K562 (cell line): ENCODE measurements at regions of chr6 and their contacts with region 1.

Region 1: DNA sequence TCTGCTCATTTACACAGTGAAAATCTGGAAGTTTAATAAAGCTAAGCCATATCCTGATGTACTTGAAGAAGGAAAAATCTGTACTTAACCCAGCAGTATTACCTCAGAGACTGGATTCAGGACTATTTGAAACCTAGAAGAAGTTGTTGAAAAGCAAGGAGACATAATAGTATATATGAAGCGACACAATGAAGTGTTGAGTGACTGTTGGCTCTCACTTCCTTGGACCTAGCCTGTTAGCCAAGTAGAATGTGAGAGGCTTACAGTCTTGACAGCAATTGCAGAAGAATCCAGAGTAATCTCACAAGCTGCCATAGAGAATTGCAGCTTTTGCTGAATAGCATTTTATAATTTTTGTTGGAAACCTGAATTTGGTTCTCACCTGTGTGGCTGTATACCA is 26.7 kb downstream of the SMAP1 start:
- DNase-seq: no peak
- ATAC-seq: no peak
- H3K4me3 ChIP-seq: no peak overlapping the region
- H3K27ac ChIP-seq: no peak overlapping the region
- H3K4me1 ChIP-seq: no peaks in the 10 kb centered on the region
- H3K27me3 ChIP-seq: no peaks in the 10 kb centered on the region; a peak in 1 of 5 replicates
- CTCF ChIP-seq: no peak
- EP300 ChIP-seq: no peak
- POLR2A ChIP-seq: no peak
- RAD21 ChIP-seq: no peak

Region 2: GRCh38 chr6:70304616-70305015 is 389.8 kb before region 1 on chr6:
- CTCF ChIA-PET with region 1: no interaction called
- POLR2A ChIA-PET with region 1: no interaction called
- in situ Hi-C with region 1: loop called (anchors 10 kb)
- intact Hi-C with region 1: no loop called
- DNase-seq: no peak
- ATAC-seq: no peak
- H3K4me3 ChIP-seq: no peak overlapping the region
- H3K27ac ChIP-seq: no peak overlapping the region
- H3K4me1 ChIP-seq: no peaks in the 10 kb centered on the region
- H3K27me3 ChIP-seq: peaks cover 12 to 21% of the 10 kb centered on the region in 2 experiments; a peak in 4 of 5 replicates
- CTCF ChIP-seq: no peak
- EP300 ChIP-seq: no peak
- POLR2A ChIP-seq: no peak
- RAD21 ChIP-seq: no peak

Region 3: GRCh38 chr6:70725817-70726415 is 31.5 kb after region 1 on chr6:
- CTCF ChIA-PET with region 1: no interaction called
- POLR2A ChIA-PET with region 1: no interaction called
- in situ Hi-C with region 1: no loop called
- intact Hi-C with region 1: no loop called
- DNase-seq: no peak
- ATAC-seq: no peak
- H3K4me3 ChIP-seq: no peak overlapping the region
- H3K27ac ChIP-seq: no peak overlapping the region
- H3K4me1 ChIP-seq: no peaks in the 10 kb centered on the region; a peak in 1 of 5 replicates
- H3K27me3 ChIP-seq: no peaks in the 10 kb centered on the region
- CTCF ChIP-seq: no peak
- EP300 ChIP-seq: no peak
- POLR2A ChIP-seq: no peak
- RAD21 ChIP-seq: no peak

Region 4: DNA sequence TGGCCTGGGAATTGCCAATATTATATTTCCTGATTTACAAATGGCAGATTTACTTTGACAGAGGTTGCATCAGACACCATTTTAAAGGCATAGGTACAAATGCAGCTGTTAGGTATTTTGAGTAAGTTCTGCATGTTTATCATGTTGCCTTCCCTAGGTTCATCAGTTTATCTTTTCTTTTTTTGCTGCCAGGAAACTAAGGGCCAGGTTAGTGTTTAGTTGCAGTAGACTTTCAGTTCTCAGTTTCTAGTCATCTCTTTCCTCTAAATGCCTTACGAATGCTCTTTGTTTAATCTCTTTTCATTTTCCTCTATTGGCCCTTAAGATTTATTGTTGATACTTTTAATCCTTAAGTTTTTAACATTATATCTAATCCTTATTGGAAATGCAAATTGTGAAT is 103.3 kb after region 1 on chr6:
- CTCF ChIA-PET with region 1: no interaction called
- POLR2A ChIA-PET with region 1: no interaction called
- in situ Hi-C with region 1: no loop called
- intact Hi-C with region 1: no loop called
- DNase-seq: no peak
- ATAC-seq: no peak
- H3K4me3 ChIP-seq: no peak overlapping the region
- H3K27ac ChIP-seq: no peak overlapping the region
- H3K4me1 ChIP-seq: no peaks in the 10 kb centered on the region
- H3K27me3 ChIP-seq: no peaks in the 10 kb centered on the region
- CTCF ChIP-seq: no peak
- EP300 ChIP-seq: no peak
- POLR2A ChIP-seq: no peak
- RAD21 ChIP-seq: no peak